ENCODE measurements at regions of chr10 and their contacts with region 1.

Region 1: GRCh38 chr10:75401569-75402485 is at the start of gene ZNF503:
- DNase-seq: peak; percentile 97
- H3K4me3 ChIP-seq: peak within 1 kb of the TSS; percentile 66 to 81 (median 77)
- H3K27ac ChIP-seq: peak within 1 kb of the TSS; percentile 55
- H3K4me1 ChIP-seq: peaks cover 34% of the 10 kb centered on the region
- H3K27me3 ChIP-seq: peaks cover 19 to 55% of the 10 kb centered on the region in 2 experiments
- CTCF ChIP-seq: peak in 1 of 2 donors; percentile 22
- POLR2A ChIP-seq: peak; percentile 88
- total RNA-seq, gene ZNF503: 2.2 and 2.7 TPM in 2 replicates

Region 2: GRCh38 chr10:75303045-75303781 is 98.6 kb before region 1 on chr10:
- CTCF ChIA-PET with region 1: no interaction called
- POLR2A ChIA-PET with region 1: no interaction called
- dilution Hi-C with region 1: no loop called
- intact Hi-C with region 1: no loop called
- DNase-seq: no peak
- H3K4me3 ChIP-seq: no peak overlapping the region
- H3K27ac ChIP-seq: no peak overlapping the region
- H3K4me1 ChIP-seq: no peaks in the 10 kb centered on the region
- H3K27me3 ChIP-seq: no peaks in the 10 kb centered on the region
- CTCF ChIP-seq: no peak
- POLR2A ChIP-seq: no peak

Region 3: DNA sequence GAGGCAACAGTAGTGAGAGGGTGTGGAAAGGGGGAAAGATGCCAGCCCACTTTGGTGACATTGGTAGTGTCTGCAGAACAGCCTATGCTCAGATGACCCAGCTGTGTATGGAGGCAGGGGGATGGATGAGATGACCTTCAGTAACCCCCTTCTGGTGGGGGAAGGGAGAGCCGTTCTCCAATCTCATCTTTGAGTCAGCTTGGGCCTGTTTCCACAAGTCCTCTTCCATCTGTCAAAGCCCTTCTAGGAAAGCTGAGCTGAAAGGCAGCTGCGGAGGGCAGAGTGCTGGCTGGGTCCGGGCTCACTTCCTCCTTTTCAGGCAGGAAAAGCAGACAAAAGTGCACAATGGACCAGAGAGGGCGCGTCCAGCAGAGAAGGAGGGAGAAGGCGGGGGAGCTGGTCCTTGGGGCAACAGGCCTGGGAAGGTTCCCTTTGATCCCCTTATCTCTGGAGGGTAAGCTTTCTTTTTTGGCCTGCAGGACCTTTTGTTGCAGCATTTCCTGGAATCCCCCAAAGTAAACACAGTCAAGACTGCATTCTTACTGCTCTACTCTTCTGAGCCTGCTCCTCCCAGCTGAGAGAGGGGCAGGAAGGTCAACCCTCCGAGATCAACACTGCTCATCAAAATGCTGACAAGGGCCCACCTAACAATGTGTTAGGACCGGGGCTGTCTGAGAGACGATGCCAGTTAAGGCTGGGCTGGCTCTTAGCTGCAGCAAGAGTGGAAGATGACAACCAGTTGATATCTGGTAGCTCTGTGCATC is 28.4 kb after region 1 on chr10:
- CTCF ChIA-PET with region 1: interaction called, 9 read pairs
- POLR2A ChIA-PET with region 1: interaction called, 7 read pairs
- dilution Hi-C with region 1: no loop called
- intact Hi-C with region 1: loop called (anchors 1 kb)
- DNase-seq: peak; percentile 45
- H3K4me3 ChIP-seq: no peak overlapping the region
- H3K27ac ChIP-seq: no peak overlapping the region
- H3K4me1 ChIP-seq: peaks cover 28% of the 10 kb centered on the region
- H3K27me3 ChIP-seq: peaks cover 0 to 4% of the 10 kb centered on the region in 2 experiments
- CTCF ChIP-seq: no peak
- POLR2A ChIP-seq: no peak

Region 4: GRCh38 chr10:75655791-75656451 is 254.1 kb after region 1 on chr10:
- CTCF ChIA-PET with region 1: no interaction called
- POLR2A ChIA-PET with region 1: no interaction called
- dilution Hi-C with region 1: no loop called
- intact Hi-C with region 1: loop called (anchors 2 kb)
- DNase-seq: peak; percentile 36
- H3K4me3 ChIP-seq: no peak overlapping the region
- H3K27ac ChIP-seq: no peak overlapping the region
- H3K4me1 ChIP-seq: peaks cover 21% of the 10 kb centered on the region
- H3K27me3 ChIP-seq: peaks cover 0 to 2% of the 10 kb centered on the region in 2 experiments
- CTCF ChIP-seq: no peak
- POLR2A ChIP-seq: no peak

Region 5: DNA sequence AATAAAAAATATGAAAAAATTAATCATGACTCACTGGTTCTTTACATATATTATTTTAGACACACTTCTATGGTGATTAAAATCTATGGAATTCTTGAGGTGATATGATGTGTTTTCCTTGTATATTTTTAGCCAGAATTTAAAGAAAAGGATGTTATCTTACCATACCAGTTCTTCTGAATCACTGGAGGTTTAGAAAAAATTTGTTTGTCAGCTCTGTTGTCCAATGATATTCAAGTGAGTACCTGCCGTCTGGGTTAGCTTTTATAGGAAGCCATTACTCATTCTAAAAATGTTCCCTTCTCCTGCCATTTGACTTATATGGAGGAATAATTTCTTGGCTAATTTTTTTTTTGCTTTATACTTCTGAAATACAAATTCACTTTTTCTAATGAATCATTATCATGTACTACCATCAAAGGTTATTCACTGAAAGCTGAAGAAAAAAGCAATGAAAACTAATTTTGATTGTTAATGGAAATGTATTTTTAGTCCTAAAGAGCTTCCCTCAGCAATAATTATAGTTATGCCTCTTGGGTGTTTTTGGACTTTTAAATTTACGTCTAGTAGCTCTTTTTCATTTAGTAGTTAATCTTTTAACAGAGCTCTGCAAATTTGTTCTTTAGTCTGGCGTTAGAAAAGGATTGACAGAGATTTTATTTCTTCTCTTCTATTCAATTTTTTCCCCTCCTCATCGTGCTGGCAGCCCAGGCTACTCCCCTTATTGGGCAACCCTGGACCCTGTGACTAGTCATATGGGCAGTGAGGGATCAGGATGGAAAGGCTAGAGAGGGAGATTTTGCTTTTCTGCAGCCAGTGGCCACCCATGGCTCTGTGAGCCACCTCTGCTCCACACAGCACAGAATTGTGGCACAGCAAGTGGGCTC is 463.8 kb after region 1 on chr10:
- CTCF ChIA-PET with region 1: no interaction called
- POLR2A ChIA-PET with region 1: no interaction called
- dilution Hi-C with region 1: no loop called
- intact Hi-C with region 1: loop called (anchors 5 kb)
- DNase-seq: peak; percentile 6
- H3K4me3 ChIP-seq: no peak overlapping the region
- H3K27ac ChIP-seq: no peak overlapping the region
- H3K4me1 ChIP-seq: peaks cover 13% of the 10 kb centered on the region
- H3K27me3 ChIP-seq: no peaks in the 10 kb centered on the region
- CTCF ChIP-seq: no peak
- POLR2A ChIP-seq: no peak

Region 6: DNA sequence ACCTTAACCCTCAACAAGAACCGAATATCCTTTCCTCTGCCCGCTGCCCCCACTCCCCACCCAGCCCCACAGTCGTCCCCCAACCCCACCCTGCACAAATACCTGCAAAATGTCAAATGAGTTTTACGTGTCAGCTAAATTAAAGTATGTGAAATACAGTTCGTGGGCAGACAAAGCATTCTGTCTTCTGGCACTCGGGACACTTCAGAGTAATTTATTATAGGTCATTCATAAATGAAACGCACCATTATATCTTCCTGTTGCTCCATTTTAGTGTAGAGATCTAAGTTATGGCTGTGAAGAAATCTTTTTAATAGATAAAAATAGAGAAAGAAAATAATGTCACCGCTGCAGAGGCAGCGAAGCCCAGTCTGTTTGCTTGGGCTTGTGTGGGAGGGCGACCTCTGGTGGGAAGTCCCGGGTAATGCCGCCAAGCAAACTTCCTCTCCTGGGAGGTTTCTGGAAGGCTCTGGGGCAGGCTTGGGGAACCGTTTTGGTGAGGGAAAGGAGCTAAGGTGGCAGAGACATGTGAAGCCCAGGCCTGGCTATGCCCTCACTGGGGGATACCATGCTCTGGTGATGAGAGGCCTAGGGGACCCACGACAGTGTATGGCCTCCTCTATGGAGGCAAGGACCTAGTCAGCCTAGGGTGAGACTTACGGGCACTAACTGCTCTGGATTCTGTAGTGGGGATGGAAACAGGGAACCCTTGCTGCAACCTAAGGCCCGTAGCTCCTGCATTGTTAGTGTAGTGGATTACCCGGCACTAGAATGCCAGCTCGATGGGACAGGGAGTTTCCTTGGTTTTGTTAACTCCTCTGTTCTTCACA is 634.5 kb after region 1 on chr10:
- CTCF ChIA-PET with region 1: interaction called, 70 read pairs
- POLR2A ChIA-PET with region 1: no interaction called
- dilution Hi-C with region 1: no loop called
- intact Hi-C with region 1: loop called (anchors 1 kb)
- DNase-seq: peak; percentile 57
- H3K4me3 ChIP-seq: no peak overlapping the region
- H3K27ac ChIP-seq: no peak overlapping the region
- H3K4me1 ChIP-seq: peaks cover 12% of the 10 kb centered on the region
- H3K27me3 ChIP-seq: no peaks in the 10 kb centered on the region
- CTCF ChIP-seq: peak; percentile 87 to 90
- POLR2A ChIP-seq: no peak

Region 7: DNA sequence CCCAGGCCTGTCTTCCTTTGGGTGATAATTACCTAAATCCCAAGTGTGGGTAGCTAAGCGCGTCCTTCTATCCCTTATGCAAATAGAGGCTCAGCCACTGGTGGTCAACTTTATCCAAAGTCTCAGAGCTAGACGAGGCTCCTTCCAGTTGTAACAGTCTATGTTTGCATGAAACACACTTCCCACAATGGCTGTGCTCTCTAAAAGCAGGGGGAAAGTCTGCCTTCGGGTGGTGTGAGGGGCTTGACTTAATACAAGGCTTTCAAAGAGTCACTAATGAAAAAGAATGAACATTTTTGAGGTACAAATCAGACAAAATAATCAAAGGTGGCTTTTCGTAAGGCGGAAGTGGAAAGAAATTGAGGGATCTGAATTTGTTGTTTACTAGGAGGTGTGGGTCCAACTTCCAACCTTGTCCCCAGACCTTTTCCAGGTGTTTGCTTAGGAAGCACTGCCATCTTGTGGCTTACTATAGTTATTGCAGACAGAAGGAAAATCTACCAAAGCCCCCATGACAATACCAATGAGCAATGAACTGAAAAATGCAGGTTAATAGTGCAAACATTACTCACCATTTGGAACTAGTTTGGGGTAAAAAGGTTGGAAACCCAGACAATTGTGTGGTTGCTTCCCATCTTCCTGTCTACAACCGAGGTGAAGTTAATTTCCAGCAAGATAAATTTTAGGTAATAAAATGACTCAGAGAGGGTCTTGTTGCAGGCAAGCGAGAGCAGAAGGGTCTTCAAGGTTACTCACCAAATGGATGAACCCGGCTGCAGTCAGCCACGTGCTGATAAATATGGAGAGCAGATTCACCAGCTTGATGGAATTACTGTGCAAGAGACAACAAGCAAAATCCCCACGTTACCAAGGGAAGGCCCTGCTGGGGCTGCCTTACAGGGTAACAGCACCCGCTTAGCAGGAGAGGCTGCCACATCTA is 1710.1 kb after region 1 on chr10:
- CTCF ChIA-PET with region 1: interaction called, 6 read pairs
- POLR2A ChIA-PET with region 1: no interaction called
- dilution Hi-C with region 1: no loop called
- intact Hi-C with region 1: loop called (anchors 5 kb)
- DNase-seq: peak; percentile 82
- H3K4me3 ChIP-seq: no peak overlapping the region
- H3K27ac ChIP-seq: peak overlapping the region; percentile 58
- H3K4me1 ChIP-seq: peaks cover 6% of the 10 kb centered on the region
- H3K27me3 ChIP-seq: no peaks in the 10 kb centered on the region
- CTCF ChIP-seq: peak; percentile 68 to 71
- POLR2A ChIP-seq: no peak